Right ventricle myocardium inferior (tissue), 1 donor: ENCODE measurements at regions of chr9 and their contacts with region 1.

Region 1: DNA sequence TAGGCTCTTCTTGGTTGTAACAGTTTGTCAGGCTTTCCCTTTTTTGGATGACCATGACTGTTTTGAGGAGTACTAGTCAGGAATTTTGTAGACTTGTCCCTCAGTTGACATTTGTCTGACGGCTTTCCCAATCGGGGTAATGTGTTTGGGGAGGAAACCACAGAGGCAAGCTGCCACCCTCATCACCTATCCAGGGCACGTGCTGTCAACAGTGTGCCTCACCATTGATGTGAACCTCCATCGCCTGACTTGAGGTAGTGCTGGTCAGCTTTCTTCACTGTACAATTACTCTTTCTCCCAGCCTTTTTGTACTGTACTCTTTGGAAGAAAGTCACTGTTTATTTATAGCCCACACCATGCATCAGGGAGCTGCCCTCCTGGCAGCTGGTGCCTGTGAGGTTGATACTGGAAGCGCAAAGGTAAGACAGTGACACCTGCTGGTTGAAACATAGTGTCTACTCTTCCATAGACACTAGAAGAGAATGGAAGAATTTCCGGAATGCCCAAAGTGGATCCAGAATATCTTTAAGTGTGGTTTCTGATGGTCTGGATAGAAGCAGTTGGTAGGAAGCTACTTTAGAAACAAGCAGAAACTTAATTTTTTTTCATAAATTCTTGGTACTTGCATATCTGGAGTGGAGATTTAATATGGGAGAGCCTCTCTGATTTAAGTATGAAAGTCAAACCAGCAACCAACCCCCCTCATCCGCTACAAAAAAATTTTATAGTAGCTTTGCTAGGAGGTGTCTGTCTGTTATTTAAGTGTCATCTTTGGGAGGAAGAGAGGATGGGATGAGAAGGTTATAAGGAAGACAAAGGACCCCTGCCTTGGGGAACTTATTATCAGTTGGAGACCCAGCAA is 69.3 kb downstream of the SNX30 start:
- DNase-seq: no peak
- ATAC-seq: peak; percentile 95

Region 2: DNA sequence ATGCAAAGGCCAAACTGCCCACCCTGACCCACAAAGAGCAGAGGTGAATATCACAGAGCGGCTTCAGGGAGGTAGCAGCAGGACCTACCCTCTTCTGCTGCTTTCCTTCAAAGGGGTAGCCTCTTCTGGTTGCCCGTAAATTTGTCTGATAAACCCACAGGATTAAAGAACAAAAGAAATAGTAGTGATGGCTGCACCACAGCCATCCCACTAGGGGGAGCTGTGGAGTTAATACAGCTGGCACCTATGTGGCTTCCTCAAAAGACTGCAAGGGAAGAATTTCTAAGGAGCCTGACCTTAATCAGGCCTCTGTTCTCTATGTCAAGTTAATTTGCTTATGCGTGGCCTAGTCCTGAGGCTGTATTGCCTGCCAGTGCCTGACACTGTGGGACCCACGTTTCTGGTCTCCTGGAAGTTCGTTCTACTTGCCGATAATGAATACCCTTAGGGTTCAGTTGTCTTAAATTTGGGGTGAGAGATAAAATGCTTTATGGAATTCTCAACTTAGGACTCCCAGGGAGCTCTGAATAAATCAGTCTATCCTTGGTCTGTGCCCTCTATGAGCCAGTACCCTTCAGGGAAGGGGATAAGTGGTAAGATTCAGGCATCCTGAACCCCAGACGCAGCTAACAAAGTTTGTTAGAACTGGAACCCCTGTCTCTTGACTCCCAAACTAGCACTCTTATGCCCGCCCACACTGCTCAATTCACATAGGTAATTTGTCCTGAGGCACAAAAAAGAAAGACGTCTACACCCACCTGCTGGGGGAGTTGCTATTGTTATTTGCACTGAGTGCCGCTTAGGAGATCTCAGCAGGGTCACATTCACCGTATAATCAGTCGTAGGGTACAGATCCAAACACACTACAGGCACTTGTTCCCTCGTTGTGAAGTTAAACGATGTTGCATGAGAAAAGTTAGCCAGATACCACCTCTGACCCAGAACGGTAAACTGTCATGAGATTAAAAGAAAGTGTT is 721.9 kb before region 1 on chr9:
- intact Hi-C with region 1: loop called (anchors 10 kb)
- DNase-seq: no peak
- ATAC-seq: peak; percentile 85

Region 3: DNA sequence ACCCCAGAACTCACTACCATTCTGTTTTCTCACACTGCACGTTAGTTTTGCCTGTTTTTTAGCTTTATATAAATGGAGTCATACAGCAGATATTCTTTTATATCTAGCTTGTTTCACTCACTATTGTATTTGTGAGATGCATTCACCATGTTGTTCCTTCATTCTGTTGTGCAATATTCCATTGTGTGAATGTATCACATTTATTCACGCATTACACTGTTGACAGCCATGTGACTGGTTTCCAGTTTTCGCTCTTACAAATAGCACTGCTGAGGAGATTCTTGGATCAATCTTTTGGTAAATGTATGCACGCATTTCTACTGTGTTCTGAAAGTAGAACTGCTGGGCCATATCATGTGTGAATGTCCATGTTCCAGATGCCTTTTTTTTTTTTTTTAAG is 75.7 kb before region 1 on chr9:
- intact Hi-C with region 1: loop called (anchors 2 kb)
- DNase-seq: no peak
- ATAC-seq: peak; percentile 67